Thyroid gland (tissue), 4 donors: ENCODE measurements at regions of chr9 and their contacts with region 1.

Region 1: GRCh38 chr9:133485361-133486260 is 6.7 kb upstream of the SLC2A6 start:
- DNase-seq: no peak
- H3K4me3 ChIP-seq: no peak overlapping the region
- H3K27ac ChIP-seq: no peak overlapping the region
- H3K4me1 ChIP-seq: peaks cover 0 to 9% of the 10 kb centered on the region in 2 donors
- H3K27me3 ChIP-seq: no peaks in the 10 kb centered on the region
- CTCF ChIP-seq: no peak
- POLR2A ChIP-seq: no peak

Region 2: GRCh38 chr9:133356391-133357091 is 129.1 kb before region 1 on chr9 and contains the starts of genes SURF1 and SURF2:
- intact Hi-C with region 1: loop called (anchors 10 kb)
- DNase-seq: peak; percentile 90 to 92
- H3K4me3 ChIP-seq: peak within 1 kb of the TSS; percentile 69 to 82 (median 74)
- H3K27ac ChIP-seq: peak within 1 kb of the TSS in 2 of 3 donors; percentile 38 to 63
- H3K4me1 ChIP-seq: peaks cover 17 to 22% of the 10 kb centered on the region in 2 donors
- H3K27me3 ChIP-seq: no peaks in the 10 kb centered on the region
- CTCF ChIP-seq: peak in 3 of 6 experiments; percentile 12 to 19 (median 14)
- POLR2A ChIP-seq: peak in 1 of 2 donors; percentile 63
- total RNA-seq, gene SURF1: 51.5 to 82.7 (median 64.7) TPM
- total RNA-seq, gene SURF2: 26.2 to 42.7 (median 31.6) TPM

Region 3: DNA sequence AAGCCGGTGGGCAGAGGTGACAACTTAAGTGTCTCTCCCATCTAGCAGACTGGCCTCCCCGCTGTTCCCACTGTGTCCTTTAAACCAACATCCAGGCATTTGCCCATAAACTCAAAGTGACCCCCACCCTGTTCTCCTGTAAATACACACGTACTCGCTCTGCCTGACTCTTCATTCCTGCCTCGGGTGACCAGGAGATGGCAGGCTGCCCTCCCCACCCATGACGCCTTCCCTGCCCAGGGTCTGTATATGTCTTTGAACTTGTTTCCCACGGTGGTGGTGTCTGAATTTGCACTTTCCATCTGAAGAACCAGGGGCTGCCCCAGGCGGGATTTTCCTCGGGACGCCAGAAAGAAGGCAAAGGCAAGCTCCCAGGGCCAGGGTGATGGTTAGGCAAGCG is 75.4 kb before region 1 on chr9:
- intact Hi-C with region 1: loop called (anchors 2 kb)
- DNase-seq: no peak
- H3K4me3 ChIP-seq: no peak overlapping the region
- H3K27ac ChIP-seq: no peak overlapping the region
- H3K4me1 ChIP-seq: no peaks in the 10 kb centered on the region
- H3K27me3 ChIP-seq: no peaks in the 10 kb centered on the region
- CTCF ChIP-seq: no peak
- POLR2A ChIP-seq: no peak